Endothelial cell of umbilical vein (primary cell): ENCODE measurements at regions of chr6 and their contacts with region 1.

Region 1: DNA sequence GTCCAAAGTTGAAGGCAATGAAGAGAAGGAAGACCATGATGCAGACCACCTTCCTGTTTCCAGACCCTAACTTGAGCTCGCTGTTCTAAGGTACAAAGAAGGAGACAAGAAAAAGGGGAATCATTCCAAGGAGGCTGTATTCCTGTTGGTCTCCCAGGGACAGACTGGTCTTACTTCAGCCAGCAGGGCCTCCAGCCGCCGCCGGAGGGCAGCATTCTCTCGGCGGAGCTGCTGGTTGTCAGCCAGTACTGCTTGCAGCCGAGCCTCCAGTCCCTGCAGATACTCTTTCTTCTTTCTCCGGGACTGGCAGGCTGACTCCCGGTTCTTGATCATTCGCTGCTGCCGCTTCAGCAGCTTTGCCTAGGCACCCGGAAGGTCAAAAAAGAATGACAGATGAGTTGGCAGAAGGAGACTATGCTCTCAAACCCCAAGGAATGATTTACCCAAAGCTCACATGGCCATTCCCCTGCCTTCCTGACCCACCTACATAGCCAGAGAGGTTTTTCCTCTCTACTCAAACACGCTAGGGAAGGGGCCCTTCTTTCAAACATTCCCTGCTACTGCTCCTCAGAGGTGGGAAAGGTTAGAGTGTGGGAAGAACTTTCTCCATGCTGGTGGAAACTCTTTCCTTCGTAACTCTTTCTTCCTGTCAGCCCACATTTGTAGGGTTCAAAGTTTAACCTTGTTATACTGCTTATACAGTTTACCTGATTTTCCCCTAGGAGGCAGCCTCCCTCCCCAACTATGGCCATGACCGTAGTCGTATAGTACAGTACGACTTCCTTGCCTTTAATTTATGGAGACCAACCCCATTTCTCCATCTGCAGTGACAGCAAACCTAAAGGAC is 9.0 kb downstream of the ATF6B start:
- DNase-seq: peak; percentile 87
- H3K4me3 ChIP-seq: no peak overlapping the region
- H3K27ac ChIP-seq: no peak overlapping the region
- H3K4me1 ChIP-seq: no peaks in the 10 kb centered on the region
- H3K27me3 ChIP-seq: no peaks in the 10 kb centered on the region
- CTCF ChIP-seq: peak; percentile 92 to 96
- POLR2A ChIP-seq: no peak

Region 2: GRCh38 chr6:31901953-31902643 is 216.9 kb before region 1 on chr6 and contains the start of gene ZBTB12:
- CTCF ChIA-PET with region 1: no interaction called
- POLR2A ChIA-PET with region 1: no interaction called
- dilution Hi-C with region 1: no loop called
- intact Hi-C with region 1: no loop called
- DNase-seq: peak; percentile 95
- H3K4me3 ChIP-seq: peak within 1 kb of the TSS; percentile 18 to 77 (median 45)
- H3K27ac ChIP-seq: no peak within 1 kb of the TSS
- H3K4me1 ChIP-seq: peaks cover 9% of the 10 kb centered on the region
- H3K27me3 ChIP-seq: peaks cover 5 to 12% of the 10 kb centered on the region in 2 experiments
- CTCF ChIP-seq: no peak
- POLR2A ChIP-seq: peak; percentile 56
- total RNA-seq, gene ZBTB12: 3.5 and 4.9 TPM in 2 replicates

Region 3: GRCh38 chr6:32058511-32058963 is 60.5 kb before region 1 on chr6:
- CTCF ChIA-PET with region 1: no interaction called
- POLR2A ChIA-PET with region 1: no interaction called
- dilution Hi-C with region 1: no loop called
- intact Hi-C with region 1: no loop called
- DNase-seq: peak; percentile 88
- H3K4me3 ChIP-seq: no peak overlapping the region
- H3K27ac ChIP-seq: no peak overlapping the region
- H3K4me1 ChIP-seq: peaks cover 9% of the 10 kb centered on the region
- H3K27me3 ChIP-seq: no peaks in the 10 kb centered on the region
- CTCF ChIP-seq: no peak
- POLR2A ChIP-seq: no peak

Region 4: GRCh38 chr6:32148289-32149091 is 29.5 kb after region 1 on chr6:
- CTCF ChIA-PET with region 1: interaction called, 12 read pairs
- POLR2A ChIA-PET with region 1: no interaction called
- dilution Hi-C with region 1: no loop called
- intact Hi-C with region 1: no loop called
- DNase-seq: peak; percentile 66
- H3K4me3 ChIP-seq: peak overlapping the region; percentile 11 to 53 (median 30)
- H3K27ac ChIP-seq: no peak overlapping the region
- H3K4me1 ChIP-seq: peaks cover 16% of the 10 kb centered on the region
- H3K27me3 ChIP-seq: peaks cover 24 to 27% of the 10 kb centered on the region in 2 experiments
- CTCF ChIP-seq: peak; percentile 37 to 40
- POLR2A ChIP-seq: no peak

Region 5: DNA sequence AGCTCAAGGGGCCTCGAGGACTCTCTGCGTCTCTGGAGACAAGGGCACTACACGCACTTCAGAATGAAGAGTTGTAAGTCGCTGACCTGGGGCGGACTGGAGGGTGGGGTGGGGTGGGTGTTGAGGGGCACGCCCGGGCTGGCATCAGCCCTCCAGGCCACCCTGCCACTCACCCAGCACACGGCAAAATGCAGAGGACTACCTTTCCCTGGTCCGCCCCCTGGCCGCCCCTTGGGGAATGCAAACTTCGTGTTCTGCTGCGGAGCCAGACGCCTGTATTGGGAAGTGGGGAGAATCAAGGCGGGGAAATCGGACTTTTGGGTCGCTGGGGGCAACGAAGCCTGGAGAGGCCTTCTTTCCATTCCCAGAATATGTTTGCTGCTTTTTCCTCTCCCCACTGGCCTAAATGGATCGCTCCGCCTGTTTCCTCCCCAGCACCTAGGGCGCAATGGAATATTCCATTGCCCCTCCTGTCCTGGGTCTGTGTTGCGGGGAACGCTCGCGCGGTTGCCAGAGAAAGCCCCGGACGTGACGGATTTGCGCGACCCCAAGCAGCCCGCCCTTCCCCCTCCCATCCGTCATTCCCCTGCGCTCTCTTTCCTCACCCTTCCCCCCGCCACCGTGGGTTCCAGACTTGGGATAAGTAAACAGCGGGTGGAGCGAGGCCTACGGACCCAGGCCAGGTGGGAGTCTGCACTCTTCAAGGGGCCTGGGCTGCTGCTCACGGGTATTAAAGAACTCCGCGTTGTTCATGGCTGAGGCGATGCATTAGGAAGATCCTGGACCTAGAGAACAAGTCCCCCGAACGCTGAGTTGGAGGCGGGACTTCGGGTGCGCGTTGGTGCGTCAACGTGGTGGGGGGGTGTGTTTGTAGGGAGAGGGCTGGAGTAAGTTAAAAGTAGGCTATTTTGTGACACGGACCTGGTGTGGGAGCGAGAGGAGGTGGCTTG is 34.8 kb after region 1 on chr6 and contains the start of gene PPT2:
- CTCF ChIA-PET with region 1: interaction called, 12 read pairs
- POLR2A ChIA-PET with region 1: no interaction called
- dilution Hi-C with region 1: no loop called
- intact Hi-C with region 1: loop called (anchors 1 kb)
- DNase-seq: peak; percentile 94
- H3K4me3 ChIP-seq: peak within 1 kb of the TSS; percentile 41 to 71 (median 60)
- H3K27ac ChIP-seq: peak within 1 kb of the TSS; percentile 51
- H3K4me1 ChIP-seq: peaks cover 24% of the 10 kb centered on the region
- H3K27me3 ChIP-seq: peaks cover 4 to 5% of the 10 kb centered on the region in 2 experiments
- CTCF ChIP-seq: peak in 1 of 2 donors; percentile 16
- POLR2A ChIP-seq: peak; percentile 61
- total RNA-seq, gene PPT2: 27.2 and 27.6 TPM in 2 replicates

Region 6: GRCh38 chr6:32439602-32440214 is 320.7 kb after region 1 on chr6 and contains the start of gene HLA-DRA:
- CTCF ChIA-PET with region 1: no interaction called
- POLR2A ChIA-PET with region 1: no interaction called
- dilution Hi-C with region 1: no loop called
- intact Hi-C with region 1: no loop called
- DNase-seq: peak; percentile 81
- H3K4me3 ChIP-seq: no peak within 1 kb of the TSS
- H3K27ac ChIP-seq: no peak within 1 kb of the TSS
- H3K4me1 ChIP-seq: no peaks in the 10 kb centered on the region
- H3K27me3 ChIP-seq: peaks cover 10 to 23% of the 10 kb centered on the region in 2 experiments
- CTCF ChIP-seq: no peak
- POLR2A ChIP-seq: no peak
- total RNA-seq, gene HLA-DRA: not detected in 2 replicates

Region 7: DNA sequence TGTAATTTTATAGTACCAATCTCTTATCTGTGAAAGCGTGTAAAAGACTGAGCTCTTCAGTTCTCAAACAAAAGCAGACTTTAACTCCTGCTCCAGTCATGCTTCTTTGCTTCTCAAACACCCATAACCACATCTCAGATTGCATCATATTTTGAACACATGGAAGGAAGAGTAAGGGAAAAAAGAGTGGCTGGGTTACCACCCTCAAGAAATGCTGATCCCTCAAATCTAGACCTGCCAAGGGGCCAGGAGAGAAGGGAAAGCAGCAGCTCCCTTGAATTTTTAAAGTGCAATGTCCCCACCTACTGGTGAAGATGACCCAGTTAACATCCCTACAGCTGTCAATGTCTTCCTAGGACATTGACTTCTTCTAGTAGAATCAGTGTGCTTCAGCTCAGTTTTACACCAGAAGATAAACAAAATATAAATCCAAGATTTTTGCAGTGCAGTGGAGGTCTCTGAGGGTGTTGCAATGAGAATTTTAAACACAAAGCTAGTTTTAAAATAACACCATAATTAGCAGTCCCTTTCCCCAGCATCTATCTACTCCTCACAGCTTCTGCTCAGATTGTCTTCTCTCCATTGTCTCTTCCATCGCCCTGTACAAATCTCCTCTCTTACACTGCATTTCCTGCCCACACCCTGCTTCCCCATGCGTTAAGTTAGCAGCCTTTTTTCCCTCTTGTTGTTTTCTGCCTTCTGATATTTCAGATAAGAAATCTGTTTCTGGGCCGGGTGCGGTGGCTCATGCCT is 667.0 kb after region 1 on chr6:
- CTCF ChIA-PET with region 1: interaction called, 15 read pairs
- POLR2A ChIA-PET with region 1: no interaction called
- dilution Hi-C with region 1: no loop called
- intact Hi-C with region 1: no loop called
- DNase-seq: peak; percentile 58
- H3K4me3 ChIP-seq: no peak overlapping the region
- H3K27ac ChIP-seq: no peak overlapping the region
- H3K4me1 ChIP-seq: no peaks in the 10 kb centered on the region
- H3K27me3 ChIP-seq: peaks cover 8 to 50% of the 10 kb centered on the region in 2 experiments
- CTCF ChIP-seq: peak; percentile 49 to 51
- POLR2A ChIP-seq: no peak